ENCODE measurements at regions of chr7 and their contacts with region 1.

Region 1: GRCh38 chr7:12686894-12687717 is at the start of gene ARL4A:
- DNase-seq: peak; percentile 99
- H3K4me3 ChIP-seq: peak within 1 kb of the TSS; percentile 81 to 96 (median 93)
- H3K27ac ChIP-seq: peak within 1 kb of the TSS; percentile 88
- H3K4me1 ChIP-seq: peaks cover 16% of the 10 kb centered on the region
- H3K27me3 ChIP-seq: no peaks in the 10 kb centered on the region
- CTCF ChIP-seq: peak; percentile 26 to 43
- POLR2A ChIP-seq: peak; percentile 99
- total RNA-seq, gene ARL4A: 30.7 and 34.1 TPM in 2 replicates

Region 2: DNA sequence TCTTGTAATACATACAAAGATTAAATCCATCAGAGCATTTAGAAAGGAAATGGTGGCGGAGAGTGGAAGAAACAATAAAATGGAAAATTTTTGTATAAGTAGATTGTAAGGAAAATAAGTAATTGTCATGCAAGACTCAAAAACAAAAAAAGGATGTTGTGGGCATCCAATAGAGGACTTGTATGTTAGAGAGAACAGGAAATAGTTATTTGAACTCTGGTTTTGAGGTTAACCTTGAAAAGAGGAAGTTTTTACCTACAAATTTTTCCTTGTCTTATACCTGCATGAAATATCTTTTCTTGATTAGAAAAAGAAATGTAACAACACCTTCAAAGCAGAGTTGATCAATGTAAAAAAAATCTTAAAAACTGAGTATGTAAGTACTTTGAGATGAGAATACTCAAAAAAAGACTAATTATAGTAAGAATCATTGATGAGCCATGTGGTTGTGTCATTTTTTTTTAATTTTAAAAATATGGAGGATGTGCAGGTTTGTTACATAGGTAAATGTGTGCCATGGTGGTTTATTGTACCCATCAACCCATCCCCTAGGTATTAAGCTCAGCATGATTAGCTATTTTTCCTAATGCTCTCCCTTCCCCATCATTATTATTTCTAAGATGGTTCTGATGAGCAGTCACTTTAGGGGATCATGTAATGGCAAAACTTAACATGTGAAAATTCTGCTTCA is 464.1 kb before region 1 on chr7:
- CTCF ChIA-PET with region 1: no interaction called
- POLR2A ChIA-PET with region 1: no interaction called
- dilution Hi-C with region 1: no loop called
- intact Hi-C with region 1: no loop called
- DNase-seq: peak; percentile 12
- H3K4me3 ChIP-seq: no peak overlapping the region
- H3K27ac ChIP-seq: no peak overlapping the region
- H3K4me1 ChIP-seq: no peaks in the 10 kb centered on the region
- H3K27me3 ChIP-seq: no peaks in the 10 kb centered on the region
- CTCF ChIP-seq: no peak
- POLR2A ChIP-seq: no peak

Region 3: GRCh38 chr7:12524794-12525386 is 162.2 kb before region 1 on chr7:
- CTCF ChIA-PET with region 1: interaction called, 20 read pairs
- POLR2A ChIA-PET with region 1: no interaction called
- dilution Hi-C with region 1: no loop called
- intact Hi-C with region 1: loop called (anchors 1 kb)
- DNase-seq: peak; percentile 75
- H3K4me3 ChIP-seq: no peak overlapping the region
- H3K27ac ChIP-seq: no peak overlapping the region
- H3K4me1 ChIP-seq: no peaks in the 10 kb centered on the region
- H3K27me3 ChIP-seq: peaks cover 2 to 24% of the 10 kb centered on the region in 2 experiments
- CTCF ChIP-seq: peak; percentile 7 to 33
- POLR2A ChIP-seq: no peak

Region 4: GRCh38 chr7:12715372-12716133 is 28.4 kb after region 1 on chr7:
- CTCF ChIA-PET with region 1: interaction called, 53 read pairs
- POLR2A ChIA-PET with region 1: interaction called, 19 read pairs
- dilution Hi-C with region 1: no loop called
- intact Hi-C with region 1: loop called (anchors 1 kb)
- DNase-seq: peak; percentile 96
- H3K4me3 ChIP-seq: peak overlapping the region in 1 of 3 experiments; percentile 1
- H3K27ac ChIP-seq: peak overlapping the region; percentile 58
- H3K4me1 ChIP-seq: peaks cover 39% of the 10 kb centered on the region
- H3K27me3 ChIP-seq: no peaks in the 10 kb centered on the region
- CTCF ChIP-seq: no peak
- POLR2A ChIP-seq: peak; percentile 64

Region 5: GRCh38 chr7:12861070-12861469 is 174.0 kb after region 1 on chr7:
- CTCF ChIA-PET with region 1: interaction called, 11 read pairs
- POLR2A ChIA-PET with region 1: interaction called, 3 read pairs
- dilution Hi-C with region 1: no loop called
- intact Hi-C with region 1: loop called (anchors 1 kb)
- DNase-seq: peak; percentile 99
- H3K4me3 ChIP-seq: no peak overlapping the region
- H3K27ac ChIP-seq: peak overlapping the region; percentile 76
- H3K4me1 ChIP-seq: peaks cover 17% of the 10 kb centered on the region
- H3K27me3 ChIP-seq: no peaks in the 10 kb centered on the region
- CTCF ChIP-seq: no peak
- POLR2A ChIP-seq: no peak

Region 6: DNA sequence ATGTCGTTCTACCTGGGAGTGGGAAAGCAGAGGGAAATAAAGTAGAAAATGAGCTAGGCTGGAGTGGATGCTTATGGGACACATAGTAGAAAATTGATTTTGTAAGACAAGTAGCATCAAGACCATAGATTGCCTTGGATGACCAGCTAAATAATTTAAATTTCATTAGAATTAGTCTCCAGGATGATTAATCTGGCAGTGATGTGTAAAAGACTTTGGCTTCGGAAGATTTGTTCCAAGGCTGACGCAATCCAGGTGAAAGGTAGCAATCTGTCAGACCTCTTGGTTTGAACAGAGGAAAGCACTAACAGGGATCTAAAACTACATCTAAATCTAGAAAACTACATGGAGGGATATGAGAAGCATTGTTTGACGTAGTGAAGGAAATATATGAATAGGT is 236.9 kb after region 1 on chr7:
- CTCF ChIA-PET with region 1: interaction called, 16 read pairs
- POLR2A ChIA-PET with region 1: no interaction called
- dilution Hi-C with region 1: no loop called
- intact Hi-C with region 1: no loop called
- DNase-seq: no peak
- H3K4me3 ChIP-seq: no peak overlapping the region
- H3K27ac ChIP-seq: no peak overlapping the region
- H3K4me1 ChIP-seq: no peaks in the 10 kb centered on the region
- H3K27me3 ChIP-seq: no peaks in the 10 kb centered on the region
- CTCF ChIP-seq: no peak
- POLR2A ChIP-seq: no peak

Region 7: DNA sequence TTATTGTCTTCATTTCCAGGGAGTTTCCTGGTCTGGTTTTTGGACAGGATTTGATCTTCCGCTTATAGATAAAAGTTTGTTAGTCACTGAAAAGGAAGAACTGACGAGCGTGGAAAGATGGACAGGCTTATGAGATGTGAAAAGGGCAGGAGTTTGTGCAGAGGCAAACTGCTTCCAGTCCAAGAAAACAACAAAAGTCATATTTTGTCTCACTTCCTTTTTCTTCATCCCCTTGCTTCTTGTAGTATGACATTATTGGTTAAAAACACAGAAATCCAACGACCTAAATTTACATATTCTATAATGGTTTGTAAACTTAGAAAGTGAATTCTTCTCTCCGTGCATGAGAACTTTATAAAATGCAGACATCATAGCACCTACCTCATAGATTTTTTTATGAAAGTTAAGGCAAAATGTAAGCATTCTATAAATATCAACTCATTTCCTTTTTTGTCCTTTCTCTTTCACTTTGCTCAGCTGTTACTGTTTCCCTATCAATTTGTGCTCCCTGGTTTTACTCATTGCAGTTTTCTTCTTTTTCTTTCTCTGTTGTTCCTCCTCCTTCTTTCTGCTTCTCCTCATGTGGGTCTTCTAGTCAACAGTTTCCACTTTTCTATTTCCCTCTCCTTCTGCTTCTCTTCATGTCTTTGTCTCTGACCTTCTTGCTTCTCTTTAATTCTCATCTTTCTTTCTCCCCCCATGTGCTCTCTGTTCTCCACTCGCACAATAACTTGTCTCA is 370.5 kb after region 1 on chr7:
- CTCF ChIA-PET with region 1: interaction called, 5 read pairs
- POLR2A ChIA-PET with region 1: no interaction called
- dilution Hi-C with region 1: no loop called
- intact Hi-C with region 1: loop called (anchors 1 kb)
- DNase-seq: peak; percentile 79
- H3K4me3 ChIP-seq: peak overlapping the region in 2 of 3 experiments; percentile 36 to 56
- H3K27ac ChIP-seq: peak overlapping the region; percentile 81
- H3K4me1 ChIP-seq: peaks cover 13% of the 10 kb centered on the region
- H3K27me3 ChIP-seq: no peaks in the 10 kb centered on the region
- CTCF ChIP-seq: no peak
- POLR2A ChIP-seq: no peak

Region 8: GRCh38 chr7:13179102-13179501 is 492.0 kb after region 1 on chr7:
- CTCF ChIA-PET with region 1: interaction called, 4 read pairs
- POLR2A ChIA-PET with region 1: no interaction called
- dilution Hi-C with region 1: no loop called
- intact Hi-C with region 1: loop called (anchors 1 kb)
- DNase-seq: peak; percentile 40
- H3K4me3 ChIP-seq: no peak overlapping the region
- H3K27ac ChIP-seq: no peak overlapping the region
- H3K4me1 ChIP-seq: no peaks in the 10 kb centered on the region
- H3K27me3 ChIP-seq: no peaks in the 10 kb centered on the region
- CTCF ChIP-seq: peak in 1 of 2 donors; percentile 16
- POLR2A ChIP-seq: no peak